MCF 10A (cell line): ENCODE measurements at regions of chr18 and their contacts with region 1.

Region 1: DNA sequence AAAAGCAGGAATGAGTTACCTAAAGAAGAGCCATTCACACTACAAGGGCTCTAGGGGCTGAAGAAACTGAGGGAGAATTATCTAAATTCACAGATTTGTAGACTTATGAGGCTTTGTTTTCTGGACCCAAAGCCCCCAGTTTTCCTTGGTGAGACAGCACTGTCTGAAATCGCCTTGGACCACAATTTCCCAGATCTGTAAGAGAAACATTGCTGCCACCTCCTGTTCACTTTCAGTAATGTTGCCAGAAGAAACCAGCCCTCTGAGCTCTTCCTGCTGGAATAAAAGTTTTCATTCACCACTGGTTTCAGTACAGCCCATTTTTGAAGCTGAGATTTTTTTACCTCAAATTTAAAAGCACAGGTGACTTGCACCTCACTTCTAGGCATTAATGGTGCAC is 169.2 kb downstream of the CDH20 start:
- DNase-seq: peak; percentile 61
- H3K4me3 Mint-ChIP-seq: no peak overlapping the region
- H3K27ac Mint-ChIP-seq: no peak overlapping the region
- H3K4me1 Mint-ChIP-seq: peaks cover 12% of the 10 kb centered on the region
- H3K27me3 Mint-ChIP-seq: peaks cover 15% of the 10 kb centered on the region
- CTCF ChIP-seq: peak; percentile 66

Region 2: GRCh38 chr18:60668583-60668982 is 833.9 kb before region 1 on chr18:
- CTCF ChIA-PET with region 1: interaction called, 11 read pairs
- POLR2A ChIA-PET with region 1: no interaction called
- intact Hi-C with region 1: no loop called
- DNase-seq: no peak
- H3K4me3 Mint-ChIP-seq: no peak overlapping the region
- H3K27ac Mint-ChIP-seq: no peak overlapping the region
- H3K4me1 Mint-ChIP-seq: no peaks in the 10 kb centered on the region
- H3K27me3 Mint-ChIP-seq: peaks cover 21% of the 10 kb centered on the region
- CTCF ChIP-seq: peak; percentile 36

Region 3: DNA sequence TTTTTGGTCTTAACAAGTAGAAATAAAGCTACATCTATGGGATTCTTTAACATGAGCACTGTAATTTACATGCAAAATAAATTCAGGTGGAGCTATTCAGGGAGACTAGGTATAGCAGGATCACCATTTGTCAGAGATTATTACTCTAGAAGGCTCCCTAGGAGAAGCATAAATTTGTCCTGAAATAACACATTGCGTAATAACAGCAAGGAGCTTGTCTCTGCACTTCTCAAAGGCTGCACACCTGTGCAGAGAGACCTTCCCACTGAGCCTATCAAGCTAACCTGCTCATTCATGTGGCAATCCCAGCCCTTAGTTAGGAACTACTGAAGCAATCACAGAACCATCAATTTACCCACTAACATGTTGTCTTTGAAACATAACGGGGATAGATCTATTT is 692.5 kb before region 1 on chr18:
- CTCF ChIA-PET with region 1: interaction called, 101 read pairs
- POLR2A ChIA-PET with region 1: interaction called, 15 read pairs
- intact Hi-C with region 1: loop called (anchors 1 kb)
- DNase-seq: peak; percentile 29
- H3K4me3 Mint-ChIP-seq: no peak overlapping the region
- H3K27ac Mint-ChIP-seq: no peak overlapping the region
- H3K4me1 Mint-ChIP-seq: peaks cover 16% of the 10 kb centered on the region
- H3K27me3 Mint-ChIP-seq: peaks cover 18% of the 10 kb centered on the region
- CTCF ChIP-seq: no peak

Region 4: GRCh38 chr18:61285777-61286176 is 216.7 kb before region 1 on chr18:
- CTCF ChIA-PET with region 1: interaction called, 10 read pairs
- POLR2A ChIA-PET with region 1: no interaction called
- intact Hi-C with region 1: no loop called
- DNase-seq: no peak
- H3K4me3 Mint-ChIP-seq: no peak overlapping the region
- H3K27ac Mint-ChIP-seq: no peak overlapping the region
- H3K4me1 Mint-ChIP-seq: no peaks in the 10 kb centered on the region
- H3K27me3 Mint-ChIP-seq: no peaks in the 10 kb centered on the region
- CTCF ChIP-seq: no peak

Region 5: DNA sequence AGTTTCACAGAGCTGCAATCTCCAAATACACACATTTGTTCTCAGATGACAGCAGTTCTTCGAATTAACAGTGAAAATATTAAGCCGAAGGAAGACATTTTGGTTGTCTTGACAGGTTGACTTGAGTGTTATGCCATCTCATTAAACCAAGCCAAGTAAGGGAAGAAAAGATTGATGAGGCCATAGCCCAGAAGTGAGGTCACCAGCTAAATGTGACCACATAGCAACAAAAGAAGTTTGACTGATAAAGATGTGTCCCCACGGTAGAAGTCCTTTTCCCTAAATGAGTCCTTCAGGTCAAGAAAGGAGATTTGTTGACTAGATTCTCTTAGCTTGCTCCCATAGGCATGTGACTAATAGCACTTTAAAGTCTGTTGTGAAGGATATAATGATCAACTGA is 13.1 kb before region 1 on chr18:
- CTCF ChIA-PET with region 1: interaction called, 18 read pairs
- POLR2A ChIA-PET with region 1: no interaction called
- intact Hi-C with region 1: no loop called
- DNase-seq: no peak
- H3K4me3 Mint-ChIP-seq: no peak overlapping the region
- H3K27ac Mint-ChIP-seq: no peak overlapping the region
- H3K4me1 Mint-ChIP-seq: no peaks in the 10 kb centered on the region
- H3K27me3 Mint-ChIP-seq: peaks cover 10% of the 10 kb centered on the region
- CTCF ChIP-seq: no peak